Activated CD8-positive, alpha-beta T cell treated with anti-CD3 and anti-CD28 coated beads for 36 hours (primary cell): ENCODE measurements at regions of chr1 and their contacts with region 1.

Region 1: GRCh38 chr1:24364975-24365678 is 46.0 kb downstream of the GRHL3 start:
- DNase-seq: peak; percentile 60
- ATAC-seq: peak; percentile 98
- H3K4me3 Mint-ChIP-seq: no peak overlapping the region
- H3K27ac Mint-ChIP-seq: peak overlapping the region; percentile 22
- H3K4me1 Mint-ChIP-seq: peaks cover 14% of the 10 kb centered on the region
- H3K27me3 Mint-ChIP-seq: no peaks in the 10 kb centered on the region
- CTCF ChIP-seq: no peak

Region 2: GRCh38 chr1:24351918-24352627 is 13.1 kb before region 1 on chr1:
- CTCF ChIA-PET with region 1: interaction called, 11 read pairs
- POLR2A ChIA-PET with region 1: interaction called, 3 read pairs
- intact Hi-C with region 1: no loop called
- DNase-seq: peak; percentile 86
- ATAC-seq: peak; percentile 45
- H3K4me3 Mint-ChIP-seq: no peak overlapping the region
- H3K27ac Mint-ChIP-seq: no peak overlapping the region
- H3K4me1 Mint-ChIP-seq: peaks cover 37% of the 10 kb centered on the region
- H3K27me3 Mint-ChIP-seq: peaks cover 1% of the 10 kb centered on the region
- CTCF ChIP-seq: no peak